K562 (cell line): ENCODE measurements at regions of chr1 and their contacts with region 1.

Region 1: DNA sequence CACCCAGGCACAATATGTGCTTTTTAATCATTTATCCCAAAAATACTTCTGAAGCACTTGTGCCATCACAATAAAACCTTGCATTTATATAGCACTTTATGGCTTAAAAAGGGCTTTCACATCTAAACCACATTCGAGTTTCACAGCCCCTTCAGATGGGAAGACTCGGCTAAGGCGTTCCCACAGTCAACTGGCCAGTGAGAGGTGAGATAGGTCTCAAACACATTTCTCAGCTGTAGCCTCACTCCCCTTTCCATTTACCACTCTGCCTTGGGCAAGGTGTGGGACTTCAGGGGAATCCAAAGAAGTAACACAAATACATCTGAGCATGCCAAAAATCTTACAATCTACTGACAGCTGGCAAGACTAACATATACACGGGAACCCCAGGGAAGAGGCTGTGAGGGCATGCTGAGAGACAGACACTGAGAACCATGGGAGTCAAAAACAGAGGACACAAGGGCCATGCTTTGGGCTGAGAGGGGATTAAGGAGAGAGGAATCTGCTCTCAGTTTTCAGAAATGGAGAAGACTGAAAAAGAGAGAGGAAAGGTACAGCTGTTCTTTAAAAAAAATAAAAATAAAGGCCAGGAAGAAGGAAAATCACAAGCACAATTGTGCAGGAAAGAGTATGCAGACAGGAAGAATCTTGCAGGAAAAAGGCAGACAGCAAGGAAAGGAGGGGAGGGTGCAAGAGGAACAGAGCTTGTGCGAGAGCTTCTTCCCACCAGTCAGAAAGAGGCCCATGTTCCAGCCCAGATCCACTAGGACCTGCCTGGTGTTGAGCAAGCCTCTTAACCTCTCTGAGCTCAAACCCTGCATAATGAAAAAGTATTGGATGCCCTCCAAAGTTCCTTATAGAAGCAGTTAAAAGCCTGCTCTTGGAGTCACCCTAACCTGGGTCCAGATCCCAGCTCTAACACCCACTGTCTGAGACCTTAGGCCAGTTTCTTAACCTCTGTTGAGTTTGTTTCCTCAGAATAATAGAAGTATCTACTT is 73.5 kb downstream of the JAK1 start:
- DNase-seq: no peak
- ATAC-seq: peak; percentile 9
- H3K4me3 ChIP-seq: no peak overlapping the region
- H3K27ac ChIP-seq: no peak overlapping the region
- H3K4me1 ChIP-seq: peaks cover 13 to 42% of the 10 kb centered on the region in 2 experiments; a peak in 4 of 5 replicates
- H3K27me3 ChIP-seq: no peaks in the 10 kb centered on the region
- CTCF ChIP-seq: no peak
- EP300 ChIP-seq: no peak
- POLR2A ChIP-seq: no peak
- RAD21 ChIP-seq: no peak

Region 2: DNA sequence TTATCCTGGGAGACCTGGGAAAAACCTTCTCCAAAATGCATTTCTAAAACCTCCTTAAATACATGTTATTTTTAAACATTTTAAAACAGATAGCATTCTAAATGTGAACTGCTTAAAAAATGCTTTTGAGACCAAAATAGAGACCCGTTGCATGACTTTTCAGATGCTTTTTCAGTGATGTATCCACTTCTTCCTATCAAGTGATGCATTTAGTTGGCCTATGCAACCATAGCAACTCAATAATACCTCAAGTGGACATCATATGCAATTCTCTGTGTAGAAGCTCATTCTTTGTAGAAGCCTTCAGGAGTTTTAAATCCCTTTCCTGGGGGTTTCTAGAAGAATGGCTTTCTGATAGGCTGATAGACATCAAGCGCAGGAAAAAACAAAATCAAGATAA is 242.5 kb before region 1 on chr1:
- CTCF ChIA-PET with region 1: no interaction called
- POLR2A ChIA-PET with region 1: no interaction called
- in situ Hi-C with region 1: no loop called
- intact Hi-C with region 1: no loop called
- DNase-seq: no peak
- ATAC-seq: no peak
- H3K4me3 ChIP-seq: no peak overlapping the region
- H3K27ac ChIP-seq: no peak overlapping the region
- H3K4me1 ChIP-seq: no peaks in the 10 kb centered on the region
- H3K27me3 ChIP-seq: peaks cover 0 to 6% of the 10 kb centered on the region in 2 experiments; a peak in 2 of 5 replicates
- CTCF ChIP-seq: no peak
- EP300 ChIP-seq: no peak
- POLR2A ChIP-seq: no peak
- RAD21 ChIP-seq: no peak

Region 3: DNA sequence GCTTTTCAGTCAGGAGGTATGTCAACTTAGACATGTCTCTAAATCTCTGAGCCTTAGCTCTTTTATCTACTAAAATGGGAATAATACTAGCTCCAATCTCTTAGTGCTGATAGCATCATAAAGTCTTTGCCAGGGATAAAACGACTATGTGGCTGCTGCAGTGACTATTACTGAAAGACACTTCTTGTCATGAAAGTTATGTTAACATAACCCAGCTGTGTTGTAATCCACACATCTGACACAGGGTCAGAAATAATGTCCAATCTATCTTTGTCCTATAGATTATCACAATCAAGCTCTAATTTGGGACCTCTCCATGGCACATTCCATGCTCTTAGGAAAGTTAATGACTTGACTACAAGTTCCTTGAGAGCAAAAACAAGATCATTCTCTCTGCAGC is 10.7 kb after region 1 on chr1:
- CTCF ChIA-PET with region 1: no interaction called
- POLR2A ChIA-PET with region 1: interaction called, 12 read pairs
- in situ Hi-C with region 1: no loop called
- intact Hi-C with region 1: no loop called
- DNase-seq: no peak
- ATAC-seq: no peak
- H3K4me3 ChIP-seq: no peak overlapping the region
- H3K27ac ChIP-seq: no peak overlapping the region
- H3K4me1 ChIP-seq: peaks cover 0 to 22% of the 10 kb centered on the region in 2 experiments; a peak in 2 of 5 replicates
- H3K27me3 ChIP-seq: no peaks in the 10 kb centered on the region
- CTCF ChIP-seq: no peak
- EP300 ChIP-seq: no peak
- POLR2A ChIP-seq: no peak
- RAD21 ChIP-seq: no peak

Region 4: DNA sequence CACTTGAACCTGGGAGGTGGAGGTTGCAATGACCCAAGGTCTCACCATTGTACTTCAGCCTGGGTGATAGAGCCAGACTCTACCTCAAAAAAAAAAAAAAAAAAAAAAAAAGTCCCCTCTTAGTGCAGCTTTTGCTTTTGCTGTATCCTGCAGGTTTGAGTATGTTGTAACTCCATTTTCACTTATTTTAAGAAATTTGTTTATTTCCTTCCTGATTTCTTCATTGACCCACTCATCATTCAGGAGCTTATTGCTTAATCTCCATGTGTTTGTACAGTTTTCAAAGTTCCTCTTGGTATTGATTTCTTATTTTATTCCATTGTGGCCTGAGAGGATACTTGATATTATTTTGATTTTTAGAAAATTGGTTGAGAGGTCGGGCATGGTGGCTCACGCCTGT is 204.2 kb after region 1 on chr1:
- CTCF ChIA-PET with region 1: no interaction called
- POLR2A ChIA-PET with region 1: no interaction called
- in situ Hi-C with region 1: no loop called
- intact Hi-C with region 1: no loop called
- DNase-seq: no peak
- ATAC-seq: no peak
- H3K4me3 ChIP-seq: no peak overlapping the region
- H3K27ac ChIP-seq: no peak overlapping the region
- H3K4me1 ChIP-seq: no peaks in the 10 kb centered on the region
- H3K27me3 ChIP-seq: no peaks in the 10 kb centered on the region
- CTCF ChIP-seq: no peak
- EP300 ChIP-seq: no peak
- POLR2A ChIP-seq: no peak
- RAD21 ChIP-seq: no peak